CD4-positive, alpha-beta memory T cell (primary cell): ENCODE measurements at regions of chr7 and their contacts with region 1.

Region 1: DNA sequence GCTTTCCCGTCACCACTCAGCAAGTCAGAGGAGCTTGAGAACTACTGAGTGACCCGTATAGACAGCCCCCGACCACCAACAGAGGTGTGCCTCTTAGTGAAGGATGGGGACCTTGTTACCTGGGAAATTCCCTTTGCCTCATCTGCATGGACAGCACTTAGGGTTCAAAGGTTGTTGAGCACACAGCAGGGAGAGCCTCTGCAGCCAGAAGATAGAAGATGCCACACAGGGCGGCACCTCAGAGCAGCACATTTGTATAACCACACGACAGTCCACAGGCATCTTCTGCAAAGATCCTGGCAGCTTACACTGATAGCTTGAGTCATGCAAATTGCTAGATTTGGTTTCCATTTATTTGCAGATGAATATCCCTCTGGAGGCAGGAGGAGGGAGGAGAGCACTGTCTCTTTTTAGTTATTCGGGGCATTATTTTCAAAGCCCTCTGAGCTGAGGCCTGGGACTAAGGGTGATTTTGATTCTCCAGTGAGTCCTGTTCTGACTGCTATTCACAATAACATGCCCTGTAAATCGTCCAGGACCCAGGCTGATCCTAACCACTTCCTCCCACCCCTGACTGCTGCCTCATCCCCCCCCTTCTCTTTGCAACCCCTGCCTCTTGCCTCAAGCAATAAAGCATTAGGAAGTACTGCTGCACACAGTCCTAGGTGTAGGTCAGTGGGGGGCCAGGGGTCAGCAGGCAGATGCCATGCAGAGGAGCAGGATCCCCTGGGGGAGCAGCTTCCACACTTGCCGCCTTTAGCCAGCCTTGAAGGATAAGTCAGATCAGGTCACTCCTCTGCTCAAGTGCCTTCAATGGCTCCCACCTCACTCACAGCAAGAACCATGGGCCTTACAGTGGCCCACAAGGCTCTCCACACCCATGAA is 24.6 kb upstream of the INMT start:
- DNase-seq: peak; percentile 77 to 82 (median 81)
- H3K4me3 ChIP-seq: peak overlapping the region; percentile 47 to 70
- H3K4me3 Mint-ChIP-seq: peak overlapping the region; percentile 87 to 96 (median 92)
- H3K27ac ChIP-seq: peak overlapping the region; percentile 57
- H3K27ac Mint-ChIP-seq: peak overlapping the region; percentile 85 to 96 (median 94)
- H3K4me1 ChIP-seq: peaks cover 60% of the 10 kb centered on the region
- H3K4me1 Mint-ChIP-seq: peaks cover 38 to 66% (median 50%) of the 10 kb centered on the region in 4 donors
- H3K27me3 ChIP-seq: no peaks in the 10 kb centered on the region
- H3K27me3 Mint-ChIP-seq: no peaks in the 10 kb centered on the region

Region 2: GRCh38 chr7:30478349-30479201 is 248.7 kb before region 1 on chr7 and contains the start of gene NOD1:
- CTCF ChIA-PET with region 1: no interaction called
- POLR2A ChIA-PET with region 1: no interaction called
- intact Hi-C with region 1: no loop called
- DNase-seq: peak; percentile 54 to 72 (median 67)
- H3K4me3 ChIP-seq: peak within 1 kb of the TSS; percentile 70 to 98
- H3K4me3 Mint-ChIP-seq: peak within 1 kb of the TSS in 7 of 8 donors; percentile 94 to 98 (median 95)
- H3K27ac ChIP-seq: peak within 1 kb of the TSS; percentile 79
- H3K27ac Mint-ChIP-seq: peak within 1 kb of the TSS in 6 of 7 donors; percentile 77 to 96 (median 90)
- H3K4me1 ChIP-seq: peaks cover 44% of the 10 kb centered on the region
- H3K4me1 Mint-ChIP-seq: peaks cover 36 to 59% (median 41%) of the 10 kb centered on the region in 4 donors
- H3K27me3 ChIP-seq: no peaks in the 10 kb centered on the region
- H3K27me3 Mint-ChIP-seq: no peaks in the 10 kb centered on the region
- total RNA-seq, gene NOD1: 20.7 to 21.3 TPM

Region 3: DNA sequence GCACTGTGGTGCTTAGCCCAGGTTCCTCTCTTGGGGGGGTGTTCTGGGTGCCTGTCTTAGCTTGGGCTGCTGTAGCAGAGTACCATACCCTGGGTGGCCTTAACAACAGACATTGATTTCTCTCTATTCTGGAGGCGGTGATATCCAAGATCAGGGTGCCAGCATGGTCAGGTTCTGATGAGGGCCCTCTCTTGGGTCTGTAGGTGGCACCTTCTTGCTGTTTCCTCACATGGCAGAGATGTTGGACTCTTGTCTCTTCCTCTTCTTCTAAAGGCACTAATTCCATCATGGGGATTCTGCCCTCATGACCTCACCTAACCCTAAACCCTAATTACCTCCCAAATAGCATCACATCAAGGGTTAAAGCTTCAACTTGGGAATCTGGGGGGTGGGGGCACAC is 25.1 kb before region 1 on chr7:
- CTCF ChIA-PET with region 1: interaction called, 27 read pairs
- POLR2A ChIA-PET with region 1: interaction called, 13 read pairs
- intact Hi-C with region 1: loop called (anchors 2 kb)
- DNase-seq: peak in 3 of 5 donors; percentile 25 to 44 (median 28)
- H3K4me3 ChIP-seq: no peak overlapping the region
- H3K4me3 Mint-ChIP-seq: no peak overlapping the region
- H3K27ac ChIP-seq: no peak overlapping the region
- H3K27ac Mint-ChIP-seq: peak overlapping the region in 1 of 7 donors; percentile 9
- H3K4me1 ChIP-seq: no peaks in the 10 kb centered on the region
- H3K4me1 Mint-ChIP-seq: peaks cover 7 to 15% (median 10%) of the 10 kb centered on the region in 4 donors
- H3K27me3 ChIP-seq: no peaks in the 10 kb centered on the region
- H3K27me3 Mint-ChIP-seq: no peaks in the 10 kb centered on the region

Region 4: DNA sequence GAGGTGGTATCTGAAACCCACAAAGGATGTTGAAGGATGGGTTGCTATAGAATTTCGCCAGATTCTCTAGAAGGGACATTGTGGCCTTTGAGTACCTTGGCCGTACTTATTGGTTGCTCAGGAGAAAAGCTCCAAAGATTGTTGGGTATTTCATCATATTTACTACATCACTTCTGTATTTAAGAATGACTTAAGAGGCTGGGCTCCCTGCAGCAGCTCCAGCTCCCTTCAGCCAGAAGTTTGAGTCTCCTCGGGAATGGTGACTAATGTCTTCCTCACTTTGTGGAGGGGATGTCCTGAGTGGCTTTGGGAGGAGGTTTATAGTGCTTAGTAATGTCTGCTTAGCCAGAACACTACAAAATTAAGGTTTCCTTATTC is 62.0 kb after region 1 on chr7:
- CTCF ChIA-PET with region 1: no interaction called
- POLR2A ChIA-PET with region 1: no interaction called
- intact Hi-C with region 1: no loop called
- DNase-seq: no peak
- H3K4me3 ChIP-seq: no peak overlapping the region
- H3K4me3 Mint-ChIP-seq: no peak overlapping the region
- H3K27ac ChIP-seq: no peak overlapping the region
- H3K27ac Mint-ChIP-seq: no peak overlapping the region
- H3K4me1 ChIP-seq: no peaks in the 10 kb centered on the region
- H3K4me1 Mint-ChIP-seq: no peaks in the 10 kb centered on the region
- H3K27me3 ChIP-seq: no peaks in the 10 kb centered on the region
- H3K27me3 Mint-ChIP-seq: no peaks in the 10 kb centered on the region